ENCODE measurements at regions of chr3 and their contacts with region 1.

Region 1: DNA sequence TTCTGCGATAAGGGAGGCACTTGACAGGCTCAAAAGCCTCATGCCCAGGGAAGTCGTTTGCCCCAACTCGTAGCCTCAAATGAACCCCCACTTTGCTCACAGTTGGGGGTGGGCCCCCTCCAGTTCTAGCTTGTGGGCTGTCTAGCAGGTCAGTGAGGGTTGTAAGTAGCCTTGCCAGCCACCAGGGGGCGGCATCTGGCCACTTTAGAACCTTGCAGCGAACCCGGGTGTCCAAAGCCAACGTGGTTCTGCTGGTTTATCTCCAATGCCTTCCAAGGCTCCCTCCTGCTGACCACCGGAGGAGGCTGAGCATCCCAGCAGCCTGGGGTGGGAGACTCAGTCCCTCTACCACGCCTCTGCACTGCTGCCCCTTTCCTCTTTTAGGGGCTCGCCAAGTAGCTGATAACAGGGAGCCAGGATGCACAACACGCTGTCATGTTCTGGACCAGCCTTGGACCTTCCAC is 9.2 kb upstream of the RBSN start:
- DNase-seq: peak; percentile 35
- H3K4me3 ChIP-seq: no peak overlapping the region
- H3K27ac ChIP-seq: no peak overlapping the region
- H3K4me1 ChIP-seq: no peaks in the 10 kb centered on the region
- H3K27me3 ChIP-seq: no peaks in the 10 kb centered on the region
- CTCF ChIP-seq: peak; percentile 78 to 95

Region 2: DNA sequence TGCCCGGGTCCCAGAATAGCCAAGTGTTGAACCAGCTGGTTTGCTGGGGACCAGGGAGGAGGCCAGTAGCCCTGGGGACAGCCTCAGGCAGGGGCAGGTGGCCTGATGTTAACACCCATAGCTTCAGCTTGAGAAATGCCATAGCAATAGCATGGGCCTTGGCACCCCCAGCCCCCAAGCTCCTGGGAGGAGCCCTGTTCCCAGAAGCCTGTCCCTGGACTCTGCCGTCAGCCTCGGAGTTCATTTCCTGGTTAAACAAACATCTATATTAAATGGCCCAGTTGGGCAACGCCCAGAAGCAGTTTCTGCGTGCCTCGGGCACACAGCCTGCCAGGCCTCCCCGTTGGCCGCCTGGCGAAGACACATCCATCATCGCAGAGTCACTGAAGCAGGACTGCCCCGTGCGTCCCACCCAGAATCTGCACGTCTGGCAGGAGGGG is 231.2 kb before region 1 on chr3:
- CTCF ChIA-PET with region 1: no interaction called
- dilution Hi-C with region 1: no loop called
- in situ Hi-C with region 1: no loop called
- intact Hi-C with region 1: no loop called
- DNase-seq: no peak
- H3K4me3 ChIP-seq: no peak overlapping the region
- H3K27ac ChIP-seq: no peak overlapping the region
- H3K4me1 ChIP-seq: no peaks in the 10 kb centered on the region
- H3K27me3 ChIP-seq: peaks cover 3% of the 10 kb centered on the region
- CTCF ChIP-seq: no peak

Region 3: DNA sequence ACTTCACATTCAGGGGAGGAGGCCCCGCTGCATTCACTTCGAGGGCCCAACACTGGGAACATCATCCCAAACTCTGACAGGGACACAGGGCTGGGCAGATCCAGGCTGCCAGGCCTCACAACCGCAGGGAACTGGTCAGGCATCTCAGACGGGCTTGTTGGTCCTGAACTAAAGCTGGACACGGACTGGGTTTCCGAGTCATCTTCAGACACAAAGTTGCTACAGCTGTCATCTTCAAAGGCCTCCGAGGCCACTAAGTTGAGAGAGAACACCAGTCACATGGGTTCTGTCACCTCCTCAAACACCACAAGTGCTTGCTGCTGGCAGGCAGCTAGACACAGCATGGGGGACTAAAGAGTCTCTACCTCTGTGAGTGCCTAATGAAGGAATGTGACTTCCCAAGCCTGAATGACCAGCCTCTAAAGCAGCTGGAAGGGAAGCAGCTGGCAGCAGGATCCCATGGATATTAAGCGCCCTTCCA is 148.8 kb after region 1 on chr3:
- CTCF ChIA-PET with region 1: no interaction called
- dilution Hi-C with region 1: no loop called
- in situ Hi-C with region 1: no loop called
- intact Hi-C with region 1: loop called (anchors 2 kb)
- DNase-seq: no peak
- H3K4me3 ChIP-seq: no peak overlapping the region
- H3K27ac ChIP-seq: no peak overlapping the region
- H3K4me1 ChIP-seq: peaks cover 14% of the 10 kb centered on the region
- H3K27me3 ChIP-seq: no peaks in the 10 kb centered on the region
- CTCF ChIP-seq: no peak

Region 4: GRCh38 chr3:15377961-15378791 is 270.1 kb after region 1 on chr3:
- CTCF ChIA-PET with region 1: no interaction called
- dilution Hi-C with region 1: no loop called
- in situ Hi-C with region 1: no loop called
- intact Hi-C with region 1: loop called (anchors 1 kb)
- DNase-seq: peak; percentile 85
- H3K4me3 ChIP-seq: no peak overlapping the region
- H3K27ac ChIP-seq: peak overlapping the region; percentile 85
- H3K4me1 ChIP-seq: no peaks in the 10 kb centered on the region
- H3K27me3 ChIP-seq: no peaks in the 10 kb centered on the region
- CTCF ChIP-seq: peak; percentile 91 to 92

Region 5: DNA sequence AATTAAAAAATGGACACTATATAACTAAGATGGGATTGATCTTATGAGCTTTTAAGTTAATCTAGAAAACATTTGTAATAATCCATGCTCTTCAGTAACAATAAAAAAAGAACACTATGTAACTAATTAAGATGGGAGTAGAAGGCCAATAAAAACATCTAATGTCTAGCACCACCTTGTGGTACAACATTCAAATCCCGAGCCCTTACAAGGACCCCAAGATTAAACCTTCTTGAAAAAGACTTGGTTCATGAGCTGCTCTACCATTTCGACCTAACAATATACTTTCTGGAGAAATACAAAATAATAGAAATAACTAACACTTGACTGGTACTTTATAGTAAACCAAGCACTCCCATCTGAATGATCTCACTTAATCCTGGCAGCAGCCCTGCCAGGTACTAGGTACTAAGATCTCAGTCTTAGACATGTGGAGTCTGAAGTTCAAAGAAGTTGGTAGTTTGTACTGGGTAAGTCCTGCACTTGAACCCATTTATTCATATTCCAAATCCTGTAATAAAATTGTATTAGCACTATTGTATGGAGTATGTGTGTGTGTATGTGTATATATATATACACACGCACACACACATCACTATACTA is 297.4 kb after region 1 on chr3:
- CTCF ChIA-PET with region 1: no interaction called
- dilution Hi-C with region 1: no loop called
- in situ Hi-C with region 1: loop called (anchors 25 kb)
- intact Hi-C with region 1: loop called (anchors 2 kb)
- DNase-seq: peak; percentile 38
- H3K4me3 ChIP-seq: no peak overlapping the region
- H3K27ac ChIP-seq: no peak overlapping the region
- H3K4me1 ChIP-seq: no peaks in the 10 kb centered on the region
- H3K27me3 ChIP-seq: no peaks in the 10 kb centered on the region
- CTCF ChIP-seq: peak; percentile 58 to 61

Region 6: GRCh38 chr3:15557511-15557946 is 449.4 kb after region 1 on chr3:
- CTCF ChIA-PET with region 1: no interaction called
- dilution Hi-C with region 1: no loop called
- in situ Hi-C with region 1: no loop called
- intact Hi-C with region 1: loop called (anchors 5 kb)
- DNase-seq: peak; percentile 77
- H3K4me3 ChIP-seq: no peak overlapping the region
- H3K27ac ChIP-seq: no peak overlapping the region
- H3K4me1 ChIP-seq: no peaks in the 10 kb centered on the region
- H3K27me3 ChIP-seq: no peaks in the 10 kb centered on the region
- CTCF ChIP-seq: peak; percentile 29 to 40